ENCODE measurements at regions of chr6 and their contacts with region 1.

Region 1: GRCh38 chr6:44524476-44525227 is 137.1 kb downstream of the CDC5L start:
- DNase-seq: no peak
- H3K4me3 ChIP-seq: no peak overlapping the region
- H3K27ac ChIP-seq: peak overlapping the region in 1 of 2 donors; percentile 46
- H3K4me1 ChIP-seq: no peaks in the 10 kb centered on the region
- H3K27me3 ChIP-seq: no peaks in the 10 kb centered on the region
- CTCF ChIP-seq: no peak
- POLR2A ChIP-seq: no peak

Region 2: DNA sequence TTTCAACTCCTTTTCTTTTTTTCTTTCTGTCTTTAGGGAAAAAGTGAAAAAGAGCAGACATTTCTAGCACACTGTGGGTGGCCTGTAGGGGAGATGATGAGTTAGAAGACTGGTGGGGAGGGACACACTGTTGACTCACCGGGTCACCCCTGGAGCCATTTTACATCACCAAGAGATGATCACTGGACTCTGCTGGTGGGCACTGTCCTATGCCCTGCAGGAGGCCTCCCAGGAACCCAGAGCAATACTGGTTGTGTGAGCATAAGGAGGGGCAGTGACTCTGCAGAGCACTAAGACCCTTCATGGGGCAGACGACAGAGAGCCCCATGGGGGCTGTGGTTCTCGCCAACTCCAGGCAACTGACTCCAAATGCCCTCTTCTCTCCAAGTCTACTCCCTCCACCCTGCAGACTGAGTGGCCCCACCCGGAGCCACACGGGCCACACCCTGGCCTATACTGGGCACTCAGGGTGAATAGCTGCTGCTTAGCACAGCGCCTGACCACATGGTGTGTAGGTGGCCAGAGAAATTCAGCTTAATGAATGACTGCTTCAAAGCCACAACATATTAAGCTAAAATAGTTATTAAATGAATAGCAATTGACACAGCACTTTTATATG is 40.4 kb after region 1 on chr6:
- intact Hi-C with region 1: loop called (anchors 2 kb)
- DNase-seq: no peak
- H3K4me3 ChIP-seq: no peak overlapping the region
- H3K27ac ChIP-seq: no peak overlapping the region
- H3K4me1 ChIP-seq: peaks cover 0 to 7% of the 10 kb centered on the region in 2 donors
- H3K27me3 ChIP-seq: no peaks in the 10 kb centered on the region
- CTCF ChIP-seq: no peak
- POLR2A ChIP-seq: no peak

Measured in breast epithelium (tissue), 4 donors.